Naive thymus-derived CD8-positive, alpha-beta T cell (primary cell): ENCODE measurements at regions of chr9 and their contacts with region 1.

Region 1: DNA sequence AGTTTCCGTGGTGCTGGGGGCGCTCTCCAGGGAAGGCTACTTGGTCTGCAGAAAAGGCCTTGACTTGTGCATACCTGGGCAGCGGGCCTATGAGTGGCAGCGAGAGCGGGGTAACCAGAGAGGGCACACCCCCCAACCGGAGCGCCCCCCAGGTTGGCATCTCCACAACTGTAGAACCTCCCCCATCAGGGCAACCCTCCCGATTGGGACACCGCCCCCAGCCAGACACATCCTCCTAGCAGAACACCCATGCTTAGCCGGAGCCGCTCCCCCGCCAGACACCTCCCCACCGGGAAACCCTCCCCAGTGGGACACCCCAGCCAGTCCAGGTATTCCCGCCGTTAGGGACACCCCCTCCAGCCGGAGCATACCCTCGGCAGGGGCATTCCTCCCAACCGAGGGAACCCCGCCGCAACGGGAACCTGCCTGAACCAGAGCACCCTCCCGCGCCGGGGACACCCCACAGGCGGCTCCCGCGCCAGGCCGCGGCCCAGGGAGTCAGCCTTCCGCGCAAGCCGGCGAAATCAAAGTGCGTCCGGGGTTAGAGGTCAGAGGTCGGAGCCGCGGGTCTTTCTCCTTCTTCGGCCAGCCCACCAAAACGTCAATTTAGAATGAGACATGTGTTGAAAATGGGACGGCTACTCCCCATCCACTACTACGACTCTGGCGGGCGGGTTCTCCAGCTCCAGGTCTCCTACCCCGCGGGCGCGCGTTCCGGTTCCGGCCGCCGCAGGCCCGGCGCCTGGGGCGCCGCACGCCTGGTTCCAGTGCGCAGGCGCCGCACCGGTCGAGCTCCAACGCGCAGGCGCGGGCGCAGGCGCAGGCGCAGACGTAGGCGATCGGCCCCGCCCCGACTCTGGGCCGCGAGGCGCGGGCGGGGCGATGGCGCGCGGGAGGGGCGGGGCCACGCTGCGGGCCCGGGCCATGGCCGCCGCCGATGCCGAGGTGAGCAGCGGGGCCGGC is at the start of gene EHMT1:
- DNase-seq: peak; percentile 82 to 96 (median 93)
- ATAC-seq: peak; percentile 82 to 85
- H3K4me3 Mint-ChIP-seq: peak within 1 kb of the TSS; percentile 82 to 98 (median 94)
- H3K27ac Mint-ChIP-seq: peak within 1 kb of the TSS; percentile 76 to 98 (median 94)
- H3K4me1 Mint-ChIP-seq: peaks cover 17 to 46% (median 42%) of the 10 kb centered on the region in 4 donors
- H3K27me3 Mint-ChIP-seq: no peaks in the 10 kb centered on the region
- polyA plus RNA-seq, gene EHMT1: 20.9 to 34.4 (median 23.0) TPM

Region 2: DNA sequence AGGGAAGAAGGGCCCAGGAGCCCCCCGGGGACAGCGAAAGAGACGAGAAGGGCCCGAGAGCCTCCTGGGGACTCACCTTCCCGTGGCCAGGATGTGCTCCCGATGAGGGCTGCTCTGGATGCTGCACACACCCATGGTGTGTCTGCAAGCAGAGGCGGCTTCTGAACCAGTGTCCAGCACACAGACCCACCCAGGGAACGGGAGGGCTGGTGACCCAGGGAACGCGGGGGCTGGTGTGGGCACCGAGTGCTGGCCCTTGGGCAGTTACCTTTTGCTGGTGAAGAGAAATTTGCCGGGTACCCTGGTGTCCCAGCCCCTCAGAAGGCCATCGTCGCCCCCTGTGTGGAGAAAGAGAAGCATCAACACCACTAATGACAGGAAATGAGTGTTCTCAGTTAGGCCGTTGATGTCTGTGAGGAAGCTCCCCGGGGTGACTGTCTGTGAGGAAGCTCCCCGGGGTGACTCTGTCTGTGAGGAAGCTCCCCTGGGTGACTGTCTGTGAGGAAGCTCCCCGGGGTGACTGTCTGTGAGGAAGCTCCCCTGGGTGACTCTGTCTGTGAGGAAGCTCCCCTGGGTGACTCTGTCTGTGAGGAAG is 53.5 kb before region 1 on chr9:
- POLR2A ChIA-PET with region 1: no interaction called
- DNase-seq: no peak
- ATAC-seq: no peak
- H3K4me3 Mint-ChIP-seq: no peak overlapping the region
- H3K27ac Mint-ChIP-seq: no peak overlapping the region
- H3K4me1 Mint-ChIP-seq: peaks cover 0 to 11% (median 5%) of the 10 kb centered on the region in 4 donors
- H3K27me3 Mint-ChIP-seq: no peaks in the 10 kb centered on the region

Region 3: GRCh38 chr9:137605121-137606004 is 13.0 kb before region 1 on chr9 and contains the start of gene ARRDC1:
- POLR2A ChIA-PET with region 1: interaction called, 15 read pairs
- DNase-seq: peak; percentile 83 to 97 (median 91)
- ATAC-seq: peak; percentile 88 to 90
- H3K4me3 Mint-ChIP-seq: peak within 1 kb of the TSS; percentile 70 to 90 (median 81)
- H3K27ac Mint-ChIP-seq: peak within 1 kb of the TSS in 4 of 10 donors; percentile 62 to 78 (median 72)
- H3K4me1 Mint-ChIP-seq: peaks cover 8 to 35% (median 26%) of the 10 kb centered on the region in 4 donors
- H3K27me3 Mint-ChIP-seq: no peaks in the 10 kb centered on the region
- polyA plus RNA-seq, gene ARRDC1: 27.2 to 42.4 (median 32.9) TPM

Region 4: DNA sequence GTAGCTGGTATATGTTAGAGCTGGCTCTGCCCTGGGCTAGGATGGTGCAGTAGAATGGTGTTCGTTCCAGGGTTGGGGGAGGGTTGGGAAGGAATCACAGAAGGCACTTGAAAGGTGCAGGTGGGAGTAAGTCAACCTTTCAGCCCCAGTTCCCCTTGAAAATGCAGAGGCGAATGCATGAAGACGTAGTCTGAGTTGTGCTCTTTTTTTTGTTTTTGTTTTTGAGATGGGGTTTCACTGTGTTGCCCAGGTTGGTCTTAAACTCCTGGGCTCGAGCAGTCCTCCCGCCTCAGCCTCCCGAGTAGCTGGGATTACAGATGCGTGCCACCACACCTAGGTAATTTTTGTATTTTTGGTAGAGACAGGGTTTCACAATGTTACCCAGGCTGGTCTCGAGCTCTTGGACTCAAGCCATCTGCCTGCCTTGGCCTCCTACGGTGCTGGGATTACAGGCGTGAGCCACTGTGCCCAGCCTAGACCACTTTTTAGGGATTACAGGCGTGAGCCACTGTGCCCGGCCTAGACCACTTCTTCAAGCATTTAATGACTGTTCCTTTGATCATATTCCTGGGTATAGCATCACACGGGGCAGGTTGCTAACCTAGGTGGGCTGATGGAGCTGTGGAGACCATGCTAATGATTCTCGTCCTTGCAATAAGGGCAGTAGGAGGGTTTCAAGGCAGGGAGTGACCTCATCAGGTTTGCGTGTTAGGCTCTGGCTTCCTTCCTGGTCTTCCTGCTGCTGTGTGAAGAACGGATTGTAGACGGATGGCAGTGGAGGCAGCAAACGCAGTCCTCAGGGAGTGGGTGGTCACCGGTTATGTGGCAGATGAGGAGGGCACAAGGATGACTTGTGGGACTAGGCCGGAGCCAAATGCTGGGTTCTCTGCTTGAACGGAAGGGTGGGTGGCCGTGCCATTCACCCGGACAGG is 14.1 kb after region 1 on chr9:
- POLR2A ChIA-PET with region 1: interaction called, 15 read pairs
- DNase-seq: no peak
- ATAC-seq: no peak
- H3K4me3 Mint-ChIP-seq: peak overlapping the region in 4 of 10 donors; percentile 2 to 48 (median 20)
- H3K27ac Mint-ChIP-seq: peak overlapping the region in 9 of 10 donors; percentile 14 to 88 (median 67)
- H3K4me1 Mint-ChIP-seq: peaks cover 29 to 79% (median 72%) of the 10 kb centered on the region in 4 donors
- H3K27me3 Mint-ChIP-seq: no peaks in the 10 kb centered on the region

Region 5: DNA sequence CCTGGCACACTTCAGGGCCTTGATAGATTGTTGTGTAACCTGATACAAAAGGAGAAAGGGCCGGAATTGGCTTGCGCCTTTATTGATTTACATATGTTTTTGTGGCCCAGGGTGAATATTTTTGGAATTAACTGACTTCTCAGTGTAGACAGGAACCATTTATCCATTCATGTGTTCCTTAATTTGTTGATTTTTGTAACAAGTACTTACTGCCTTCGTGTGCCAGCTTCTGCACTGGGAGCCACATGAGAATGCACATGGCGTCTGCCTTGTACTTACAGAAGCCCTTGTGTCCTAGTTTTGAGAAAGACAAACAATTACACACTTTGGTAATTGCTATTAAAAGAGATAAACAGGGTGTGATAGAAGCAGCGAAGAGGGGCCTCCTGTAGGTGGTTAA is 26.8 kb after region 1 on chr9:
- POLR2A ChIA-PET with region 1: no interaction called
- DNase-seq: no peak
- ATAC-seq: no peak
- H3K4me3 Mint-ChIP-seq: no peak overlapping the region
- H3K27ac Mint-ChIP-seq: peak overlapping the region in 3 of 10 donors; percentile 8 to 15 (median 9)
- H3K4me1 Mint-ChIP-seq: peaks cover 34 to 76% (median 70%) of the 10 kb centered on the region in 4 donors
- H3K27me3 Mint-ChIP-seq: no peaks in the 10 kb centered on the region